ENCODE measurements at regions of chr3 and their contacts with region 1.

Region 1: GRCh38 chr3:119702530-119703157 is at the start of gene CFAP91:
- DNase-seq: peak; percentile 78
- H3K4me3 Mint-ChIP-seq: peak within 1 kb of the TSS; percentile 67
- H3K27ac Mint-ChIP-seq: no peak within 1 kb of the TSS
- H3K4me1 Mint-ChIP-seq: peaks cover 37% of the 10 kb centered on the region
- H3K27me3 Mint-ChIP-seq: peaks cover 29% of the 10 kb centered on the region
- total RNA-seq, gene CFAP91: 0.24 TPM in 1 of 2 replicates, not detected in the other

Region 2: GRCh38 chr3:118943597-118943996 is 759.0 kb before region 1 on chr3:
- intact Hi-C with region 1: loop called (anchors 10 kb)
- DNase-seq: no peak
- H3K4me3 Mint-ChIP-seq: no peak overlapping the region
- H3K27ac Mint-ChIP-seq: no peak overlapping the region
- H3K4me1 Mint-ChIP-seq: peaks cover 19% of the 10 kb centered on the region
- H3K27me3 Mint-ChIP-seq: peaks cover 3% of the 10 kb centered on the region

Region 3: DNA sequence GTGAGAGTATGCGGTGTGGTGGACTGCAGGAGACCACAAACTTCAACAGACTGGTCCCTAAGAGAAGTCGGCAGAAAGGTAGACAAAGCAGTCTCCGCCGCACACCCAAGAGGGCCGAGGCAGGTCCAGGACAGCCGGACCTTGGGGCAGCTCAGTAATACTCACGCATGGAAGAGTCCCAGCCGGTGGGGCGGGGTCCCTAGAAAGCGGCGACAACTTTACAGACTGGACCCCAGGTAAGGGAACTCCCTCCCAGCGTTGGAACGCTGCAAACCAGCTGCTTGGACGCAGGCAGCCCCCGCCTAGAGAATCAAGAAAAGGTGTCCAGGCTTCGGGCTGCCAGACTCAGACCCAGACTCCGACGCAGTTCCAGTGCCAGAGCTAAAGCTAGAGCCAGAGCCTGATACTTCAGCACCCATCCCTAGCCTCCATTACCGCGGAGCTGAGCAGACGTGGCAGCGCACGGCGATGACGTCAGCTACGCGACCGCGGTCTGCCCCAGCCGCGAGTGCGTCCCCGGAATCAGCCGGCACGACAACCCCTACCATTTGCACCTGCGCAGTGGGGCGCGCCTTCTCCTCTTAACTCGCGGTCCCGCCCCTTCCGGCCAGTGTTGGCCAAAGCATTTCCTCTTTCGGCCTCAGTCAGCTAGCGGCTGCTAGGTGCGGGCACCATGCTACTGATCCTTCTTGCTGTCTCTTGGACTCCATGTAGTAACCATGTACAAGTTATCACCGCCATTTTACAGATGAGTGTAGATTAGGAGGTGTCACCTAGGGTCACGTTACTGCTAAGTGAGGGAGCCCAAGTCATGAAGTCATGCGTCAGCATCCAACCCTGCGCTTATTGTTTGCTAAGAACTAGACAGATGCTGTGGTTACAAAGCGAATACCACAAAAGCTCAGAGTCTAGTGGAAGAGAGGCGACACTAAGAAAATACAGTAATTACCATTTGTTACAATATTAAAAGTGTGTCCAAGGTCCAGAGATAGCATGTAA is 239.2 kb before region 1 on chr3 and contains the start of gene TMEM39A:
- intact Hi-C with region 1: loop called (anchors 1 kb)
- DNase-seq: peak; percentile 98
- H3K4me3 Mint-ChIP-seq: peak within 1 kb of the TSS; percentile 98
- H3K27ac Mint-ChIP-seq: peak within 1 kb of the TSS; percentile 97
- H3K4me1 Mint-ChIP-seq: peaks cover 49% of the 10 kb centered on the region
- H3K27me3 Mint-ChIP-seq: peaks cover 3% of the 10 kb centered on the region
- total RNA-seq, gene TMEM39A: 51.3 and 56.9 TPM in 2 replicates

Region 4: GRCh38 chr3:119647171-119647570 is 55.5 kb before region 1 on chr3:
- intact Hi-C with region 1: no loop called
- DNase-seq: no peak
- H3K4me3 Mint-ChIP-seq: no peak overlapping the region
- H3K27ac Mint-ChIP-seq: no peak overlapping the region
- H3K4me1 Mint-ChIP-seq: peaks cover 16% of the 10 kb centered on the region
- H3K27me3 Mint-ChIP-seq: no peaks in the 10 kb centered on the region

Region 5: DNA sequence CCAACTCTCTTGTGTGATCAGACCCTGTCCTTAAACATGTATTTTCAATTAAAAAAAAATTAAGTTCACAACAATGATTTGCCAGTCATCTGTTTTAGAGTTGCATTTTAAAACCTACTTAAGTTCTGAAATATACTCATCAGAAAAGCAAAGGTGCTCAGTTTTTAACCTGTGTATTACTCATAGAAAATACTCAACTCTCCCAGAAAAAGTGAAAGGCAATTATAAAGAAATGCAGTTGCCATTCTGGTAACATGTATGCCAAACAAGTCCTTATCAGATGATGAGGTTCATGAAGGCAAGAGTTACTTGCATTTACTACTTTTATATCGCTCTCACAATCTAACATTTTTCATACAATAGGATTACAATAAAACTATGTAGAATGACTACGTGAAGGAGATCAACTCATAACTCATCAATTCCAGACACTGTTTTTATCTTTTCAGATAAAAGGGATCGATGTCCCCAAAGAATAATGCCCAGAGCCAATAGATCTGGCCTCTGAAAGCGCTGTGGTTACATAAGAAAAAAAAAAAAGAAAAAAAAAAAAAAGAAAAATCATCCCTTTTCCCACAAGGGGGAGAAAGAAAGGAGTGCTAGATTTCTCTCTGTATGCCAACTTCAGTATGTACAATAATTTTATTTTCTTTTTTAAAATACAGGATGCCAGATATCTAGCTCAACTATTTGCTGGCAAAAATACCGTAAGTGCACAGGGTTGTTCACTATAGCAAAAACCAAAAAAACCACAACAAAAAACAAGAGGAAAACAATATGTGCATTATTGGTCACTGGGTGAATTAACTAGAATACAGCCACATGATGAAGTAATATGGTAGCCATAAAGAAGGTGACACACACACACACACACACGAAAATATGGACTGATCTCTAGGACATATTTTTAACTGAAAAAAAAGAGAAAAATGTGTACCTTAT is 216.6 kb after region 1 on chr3:
- intact Hi-C with region 1: loop called (anchors 10 kb)
- DNase-seq: no peak
- H3K4me3 Mint-ChIP-seq: no peak overlapping the region
- H3K27ac Mint-ChIP-seq: no peak overlapping the region
- H3K4me1 Mint-ChIP-seq: peaks cover 10% of the 10 kb centered on the region
- H3K27me3 Mint-ChIP-seq: no peaks in the 10 kb centered on the region

Measured in activated T-helper 1 cell treated with anti-CD3 and anti-CD28 coated beads, Interleukin-12 subunit alpha, Interleukin-12 subunit beta, Interleukin-2, Interleukin-4 antibody, amounts not matched to agents 30 ng/mL and 10 ng/mL and 1 ng/mL, durations not matched to agents 14 hours and 24 hours and 36 hours (primary cell).